ENCODE measurements at regions of chr10 and their contacts with region 1.

Region 1: DNA sequence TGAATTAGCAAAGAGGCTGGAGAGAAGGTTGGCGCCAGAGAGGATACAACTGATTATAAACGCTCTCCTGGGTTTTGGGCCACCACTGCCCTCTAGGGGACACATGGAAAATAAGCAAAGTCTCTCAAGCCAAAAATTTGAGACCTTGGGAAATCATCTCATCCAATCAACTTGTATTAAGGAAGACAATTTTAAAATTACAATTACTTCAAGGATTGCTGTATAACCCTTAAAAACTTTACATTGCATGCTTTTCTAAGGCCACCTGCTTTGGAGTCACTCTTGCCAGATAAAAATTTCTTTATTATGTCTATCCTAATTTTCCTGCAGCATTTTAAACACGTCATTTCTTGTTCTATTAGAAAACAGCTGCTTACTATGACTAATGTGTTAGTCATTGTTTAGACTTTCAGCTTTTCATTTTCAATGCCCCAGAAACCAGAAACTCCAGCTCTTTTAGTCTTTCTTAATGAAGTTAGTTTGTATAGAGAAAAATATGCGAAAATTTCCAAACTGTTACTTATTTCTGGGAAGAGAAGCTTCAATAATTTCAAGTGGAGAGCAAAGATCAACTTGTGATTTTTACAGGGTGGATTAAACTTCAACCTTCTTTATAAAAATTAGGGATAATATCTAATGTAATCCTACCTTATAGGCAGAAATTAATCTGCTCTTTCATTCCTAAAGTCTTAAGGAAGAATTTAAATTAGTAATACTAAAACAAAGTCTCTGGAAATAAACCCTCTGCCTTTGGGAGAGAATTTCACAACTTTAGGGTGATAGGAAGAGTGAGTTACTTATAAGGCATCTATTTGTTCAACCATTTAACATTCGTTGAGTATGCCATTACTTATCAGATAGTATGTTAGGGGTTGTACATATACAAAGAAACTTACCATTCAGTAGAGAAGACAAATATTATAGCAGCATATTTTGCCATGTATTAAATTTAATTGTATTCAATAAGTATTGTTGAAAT is 20.6 kb upstream of the RHOBTB1 start:
- DNase-seq: no peak
- H3K4me3 ChIP-seq: no peak overlapping the region
- H3K27ac ChIP-seq: peak overlapping the region; percentile 15 to 68 (median 40)
- H3K4me1 ChIP-seq: peaks cover 5 to 43% (median 35%) of the 10 kb centered on the region in 4 donors
- H3K27me3 ChIP-seq: no peaks in the 10 kb centered on the region
- CTCF ChIP-seq: peak; percentile 77 to 84 (median 82)
- EP300 ChIP-seq: no peak
- POLR2A ChIP-seq: no peak

Region 2: DNA sequence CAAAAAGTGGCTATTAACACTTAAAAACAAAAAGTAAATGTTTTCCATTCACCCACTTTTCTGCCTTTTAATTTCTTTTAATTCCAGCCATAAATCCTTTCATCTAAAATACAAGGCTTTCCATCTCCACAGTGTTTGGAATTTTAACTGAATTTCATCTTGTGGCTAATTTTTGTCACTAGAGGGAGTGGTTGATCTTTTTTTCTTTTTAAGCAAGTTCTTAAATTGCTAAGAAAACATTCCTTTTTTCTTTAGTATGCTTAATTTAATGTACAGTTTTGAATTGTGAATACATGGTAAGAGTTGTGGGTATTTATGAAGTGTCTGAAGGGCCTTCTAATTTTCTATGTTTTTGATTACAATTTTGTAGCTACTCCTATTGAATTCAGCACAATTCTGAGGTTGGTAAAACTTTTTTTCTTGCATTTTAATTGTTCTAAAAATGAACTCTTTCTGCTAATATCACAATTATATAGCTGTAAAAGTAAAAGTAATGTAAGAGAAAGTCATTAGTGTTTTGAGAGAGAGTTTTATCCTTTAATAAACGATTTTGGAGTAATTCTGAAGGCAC is 520.0 kb before region 1 on chr10:
- intact Hi-C with region 1: no loop called
- DNase-seq: no peak
- H3K4me3 ChIP-seq: no peak overlapping the region
- H3K27ac ChIP-seq: no peak overlapping the region
- H3K4me1 ChIP-seq: peaks cover 12 to 26% (median 19%) of the 10 kb centered on the region in 4 donors
- H3K27me3 ChIP-seq: no peaks in the 10 kb centered on the region
- CTCF ChIP-seq: peak; percentile 63 to 66 (median 66)
- EP300 ChIP-seq: no peak
- POLR2A ChIP-seq: no peak

Region 3: DNA sequence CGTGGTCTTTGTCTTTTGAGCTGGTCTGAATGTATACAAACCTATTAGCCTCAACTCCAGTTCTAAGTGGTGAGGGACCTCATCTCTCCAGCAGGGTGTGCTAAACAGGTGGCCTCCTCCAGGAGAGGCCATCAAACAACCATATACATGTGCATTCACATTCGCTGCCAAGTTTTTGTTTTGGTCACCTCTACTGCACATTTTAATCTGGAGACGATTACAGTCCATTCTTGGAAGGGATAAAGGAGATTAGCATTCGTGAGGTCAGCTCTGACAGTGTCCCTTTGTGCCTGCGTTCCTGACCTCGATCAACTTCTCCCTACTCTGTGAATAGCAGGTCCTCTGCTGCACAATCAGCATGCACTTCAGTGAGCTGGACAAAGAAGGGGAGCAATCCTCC is 81.4 kb before region 1 on chr10:
- intact Hi-C with region 1: loop called (anchors 10 kb)
- DNase-seq: no peak
- H3K4me3 ChIP-seq: no peak overlapping the region
- H3K27ac ChIP-seq: no peak overlapping the region
- H3K4me1 ChIP-seq: peaks cover 0 to 10% (median 4%) of the 10 kb centered on the region in 4 donors
- H3K27me3 ChIP-seq: no peaks in the 10 kb centered on the region
- CTCF ChIP-seq: peak; percentile 18 to 45 (median 23)
- EP300 ChIP-seq: no peak
- POLR2A ChIP-seq: no peak

Region 4: GRCh38 chr10:61284222-61284890 is 319.8 kb after region 1 on chr10:
- intact Hi-C with region 1: loop called (anchors 5 kb)
- DNase-seq: no peak
- H3K4me3 ChIP-seq: no peak overlapping the region
- H3K27ac ChIP-seq: peak overlapping the region in 1 of 4 donors; percentile 4
- H3K4me1 ChIP-seq: peaks cover 0 to 40% (median 32%) of the 10 kb centered on the region in 4 donors
- H3K27me3 ChIP-seq: no peaks in the 10 kb centered on the region
- CTCF ChIP-seq: peak; percentile 65 to 81 (median 72)
- EP300 ChIP-seq: no peak
- POLR2A ChIP-seq: no peak

Measured in esophagus muscularis mucosa (tissue), 4 donors.